Vagina (tissue), 2 donors: ENCODE measurements at regions of chr1 and their contacts with region 1.

Region 1: DNA sequence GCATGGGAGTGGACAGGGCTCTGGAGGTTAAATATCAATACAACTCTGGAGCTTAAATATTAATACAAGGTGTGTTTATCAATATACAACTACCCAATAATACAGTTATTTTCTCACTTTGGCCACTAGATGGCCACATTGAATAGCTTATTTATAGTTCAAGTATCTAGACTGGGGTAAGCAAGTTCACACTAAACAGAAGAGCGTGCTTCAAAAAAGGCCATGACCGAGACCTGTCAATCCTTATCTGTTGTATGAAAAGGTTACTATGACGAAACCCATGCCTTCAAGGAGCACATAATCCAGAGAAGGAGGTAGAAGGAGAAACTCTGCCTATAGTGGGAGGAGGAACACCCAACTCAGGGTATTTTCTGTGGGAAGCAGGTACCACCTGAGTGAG is 29.1 kb downstream of the CHML start:
- DNase-seq: no peak
- H3K4me3 ChIP-seq: no peak overlapping the region
- H3K27ac ChIP-seq: no peak overlapping the region
- H3K4me1 ChIP-seq: no peaks in the 10 kb centered on the region
- H3K27me3 ChIP-seq: no peaks in the 10 kb centered on the region
- CTCF ChIP-seq: peak; percentile 71 to 73 (median 73)
- POLR2A ChIP-seq: no peak

Region 2: DNA sequence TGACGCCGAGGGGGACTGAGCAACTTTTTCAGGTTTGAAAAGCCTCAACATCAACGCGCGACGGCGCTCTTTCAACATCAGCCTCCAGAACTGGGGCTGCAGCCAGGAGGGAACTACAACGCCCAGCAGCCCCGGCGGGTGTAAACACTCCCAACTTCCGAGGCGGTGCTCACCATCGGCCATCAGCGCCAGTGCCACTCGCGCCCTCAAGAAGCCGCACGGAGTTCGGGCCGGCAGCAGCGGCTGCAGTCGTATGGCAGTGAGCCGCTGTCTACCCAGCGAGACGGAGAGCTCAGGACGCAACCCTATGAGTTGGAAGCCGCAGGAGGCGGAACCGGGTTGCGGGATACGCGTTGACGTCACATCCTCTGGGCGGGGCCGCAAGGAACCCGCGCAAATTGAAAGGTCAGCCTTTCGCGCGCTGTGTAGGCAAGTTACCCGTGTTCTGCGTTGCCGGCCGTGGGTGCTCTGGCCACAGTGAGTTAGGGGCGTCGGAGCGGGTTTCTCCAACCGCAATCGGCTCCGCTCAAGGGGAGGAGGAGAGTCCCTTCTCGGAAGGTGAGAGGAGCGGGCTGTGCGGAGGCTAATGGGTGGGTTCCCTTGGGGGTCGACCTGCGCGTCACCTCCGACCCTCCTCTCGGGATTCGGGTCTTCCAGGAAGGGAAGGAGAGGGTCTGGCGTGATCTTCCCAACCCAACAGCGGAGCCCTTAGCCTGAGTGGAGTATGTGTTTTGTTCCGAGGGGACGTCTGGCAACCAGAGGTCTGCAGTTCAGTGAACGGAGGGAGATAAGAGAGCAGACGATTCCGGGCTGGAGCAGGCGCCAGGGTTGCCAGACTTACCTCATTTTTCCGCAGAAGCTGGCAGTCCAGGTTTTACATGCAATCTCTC is 237.0 kb after region 1 on chr1 and contains the start of gene EXO1:
- intact Hi-C with region 1: loop called (anchors 10 kb)
- DNase-seq: peak in 1 of 2 donors; percentile 89
- H3K4me3 ChIP-seq: peak within 1 kb of the TSS; percentile 70 to 86
- H3K27ac ChIP-seq: peak within 1 kb of the TSS; percentile 98
- H3K4me1 ChIP-seq: peaks cover 13% of the 10 kb centered on the region
- H3K27me3 ChIP-seq: no peaks in the 10 kb centered on the region
- CTCF ChIP-seq: peak in 2 of 3 experiments; percentile 15 to 39
- POLR2A ChIP-seq: no peak
- total RNA-seq, gene EXO1: 10.6 TPM